ENCODE measurements at regions of chr9 and their contacts with region 1.

Region 1: DNA sequence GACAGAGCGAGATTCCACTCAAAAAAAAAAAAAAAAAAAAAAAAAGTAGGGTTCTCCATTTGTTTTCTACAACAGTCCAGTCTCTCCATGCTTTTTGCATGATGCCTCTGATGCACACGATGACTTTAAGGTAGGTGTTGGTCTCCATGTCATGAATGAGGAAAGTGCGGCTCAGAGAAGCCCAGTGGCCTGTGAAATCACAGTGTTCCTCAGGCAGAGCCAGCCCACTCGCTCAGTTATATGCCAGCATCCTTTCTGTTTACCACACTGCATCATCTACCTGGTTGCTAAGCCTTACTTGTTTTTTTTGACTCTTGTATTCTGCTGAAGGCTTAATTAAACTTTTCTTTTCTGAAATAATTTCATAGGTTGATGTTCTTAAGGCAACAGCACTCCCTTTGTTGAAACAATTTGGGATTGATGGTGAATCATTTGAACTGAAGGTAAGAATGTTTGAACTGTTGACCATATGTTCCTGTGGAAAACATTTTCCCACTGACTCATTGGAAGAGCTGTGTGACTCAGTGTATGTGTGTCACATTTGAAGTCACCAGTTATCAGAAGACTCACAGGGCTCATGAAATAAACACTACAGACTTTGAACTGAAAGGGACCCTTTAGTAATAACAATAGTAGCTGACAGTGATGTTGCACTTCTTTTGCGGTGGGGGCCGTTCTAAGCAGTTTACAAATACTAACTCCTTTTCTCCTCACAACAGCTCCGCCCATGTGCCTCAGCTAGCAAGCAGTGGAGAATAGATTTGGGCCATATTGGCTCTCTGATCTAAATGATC is 40.2 kb downstream of the RCL1 start:
- DNase-seq: peak; percentile 80
- H3K4me3 Mint-ChIP-seq: no peak overlapping the region
- H3K27ac Mint-ChIP-seq: peak overlapping the region; percentile 85
- H3K4me1 Mint-ChIP-seq: peaks cover 46% of the 10 kb centered on the region
- H3K27me3 Mint-ChIP-seq: no peaks in the 10 kb centered on the region

Region 2: DNA sequence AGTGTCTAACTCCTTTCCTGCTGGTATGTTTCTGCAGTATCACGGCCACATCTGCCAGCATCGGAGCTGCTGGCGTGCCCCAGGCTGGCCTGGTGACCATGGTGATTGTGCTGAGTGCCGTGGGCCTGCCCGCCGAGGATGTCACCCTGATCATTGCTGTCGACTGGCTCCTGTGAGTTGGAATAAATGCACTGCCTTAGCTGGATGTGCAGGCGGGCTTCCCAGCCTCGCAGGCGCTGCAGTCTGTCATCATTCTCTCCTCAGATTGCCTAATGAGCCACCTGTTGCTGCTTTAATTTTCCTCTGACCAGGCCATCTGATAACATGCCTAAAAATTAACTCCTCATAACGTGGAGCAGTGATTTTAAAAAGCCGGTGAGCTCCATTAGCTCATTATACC is 250.0 kb before region 1 on chr9:
- CTCF ChIA-PET with region 1: no interaction called
- intact Hi-C with region 1: no loop called
- DNase-seq: no peak
- H3K4me3 Mint-ChIP-seq: no peak overlapping the region
- H3K27ac Mint-ChIP-seq: no peak overlapping the region
- H3K4me1 Mint-ChIP-seq: no peaks in the 10 kb centered on the region
- H3K27me3 Mint-ChIP-seq: no peaks in the 10 kb centered on the region

Region 3: DNA sequence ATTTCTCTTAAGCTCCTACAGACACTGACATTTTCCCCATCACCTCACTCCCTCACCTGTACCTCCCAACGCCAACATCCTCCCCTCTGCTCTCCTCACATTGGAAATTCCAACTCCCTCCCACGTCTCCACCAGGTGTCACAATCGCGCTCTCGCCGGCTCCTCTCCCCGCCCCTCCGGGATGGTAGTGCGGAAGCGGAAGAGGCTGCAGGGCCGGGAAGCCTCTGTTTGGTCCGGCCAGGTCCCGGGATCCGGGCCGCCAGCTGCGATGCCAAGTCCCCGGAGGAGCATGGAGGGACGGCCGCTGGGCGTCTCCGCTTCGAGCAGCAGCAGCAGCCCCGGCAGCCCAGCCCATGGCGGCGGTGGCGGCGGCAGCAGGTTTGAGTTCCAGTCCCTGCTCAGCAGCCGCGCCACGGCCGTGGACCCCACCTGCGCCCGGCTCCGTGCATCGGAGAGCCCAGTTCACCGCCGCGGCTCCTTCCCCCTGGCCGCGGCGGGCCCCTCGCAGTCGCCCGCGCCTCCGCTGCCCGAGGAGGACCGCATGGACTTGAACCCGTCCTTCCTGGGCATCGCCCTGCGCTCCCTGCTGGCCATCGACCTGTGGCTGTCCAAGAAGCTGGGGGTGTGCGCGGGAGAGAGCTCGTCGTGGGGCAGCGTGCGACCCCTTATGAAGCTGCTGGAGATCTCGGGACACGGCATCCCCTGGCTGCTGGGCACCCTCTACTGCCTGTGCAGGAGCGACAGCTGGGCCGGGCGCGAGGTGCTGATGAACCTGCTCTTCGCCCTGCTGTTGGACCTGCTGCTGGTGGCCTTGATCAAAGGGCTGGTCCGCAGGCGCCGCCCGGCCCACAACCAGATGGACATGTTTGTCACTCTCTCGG is 170.6 kb before region 1 on chr9 and contains the start of gene PLPP6:
- CTCF ChIA-PET with region 1: no interaction called
- intact Hi-C with region 1: loop called (anchors 5 kb)
- DNase-seq: peak; percentile 91
- H3K4me3 Mint-ChIP-seq: peak within 1 kb of the TSS; percentile 87
- H3K27ac Mint-ChIP-seq: peak within 1 kb of the TSS; percentile 77
- H3K4me1 Mint-ChIP-seq: peaks cover 52% of the 10 kb centered on the region
- H3K27me3 Mint-ChIP-seq: no peaks in the 10 kb centered on the region
- total RNA-seq, gene PLPP6: 4.6 to 5.3 TPM

Region 4: GRCh38 chr9:4750023-4750673 is 82.8 kb before region 1 on chr9:
- CTCF ChIA-PET with region 1: no interaction called
- intact Hi-C with region 1: loop called (anchors 1 kb)
- DNase-seq: no peak
- H3K4me3 Mint-ChIP-seq: no peak overlapping the region
- H3K27ac Mint-ChIP-seq: no peak overlapping the region
- H3K4me1 Mint-ChIP-seq: peaks cover 34% of the 10 kb centered on the region
- H3K27me3 Mint-ChIP-seq: no peaks in the 10 kb centered on the region

Region 5: GRCh38 chr9:4814913-4815312 is 18.1 kb before region 1 on chr9:
- CTCF ChIA-PET with region 1: interaction called, 4 read pairs
- intact Hi-C with region 1: loop called (anchors 1 kb)
- DNase-seq: no peak
- H3K4me3 Mint-ChIP-seq: peak overlapping the region; percentile 9
- H3K27ac Mint-ChIP-seq: peak overlapping the region; percentile 87
- H3K4me1 Mint-ChIP-seq: peaks cover 60% of the 10 kb centered on the region
- H3K27me3 Mint-ChIP-seq: no peaks in the 10 kb centered on the region

Region 6: DNA sequence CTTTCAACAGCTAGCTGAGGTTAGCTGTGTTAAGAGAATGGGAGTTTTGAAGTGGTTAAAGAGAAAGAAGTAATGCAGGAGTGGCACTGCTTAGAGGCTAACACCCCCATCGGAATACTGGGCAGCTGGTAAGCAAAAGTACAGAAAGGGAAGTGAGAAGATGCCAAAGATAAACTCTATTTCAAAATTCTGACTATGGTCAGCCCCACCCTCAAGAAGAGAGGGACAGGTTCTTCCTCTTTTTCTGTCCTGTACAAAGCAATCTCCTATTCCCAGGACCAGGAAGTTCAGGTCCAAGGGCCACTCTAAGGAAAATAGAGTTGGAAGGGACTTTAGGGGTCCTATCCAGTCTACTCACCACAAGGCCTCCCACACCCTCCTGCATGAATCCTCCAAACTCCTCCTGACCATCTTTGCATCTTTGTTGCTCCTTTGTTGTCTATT is 106.2 kb after region 1 on chr9:
- CTCF ChIA-PET with region 1: no interaction called
- intact Hi-C with region 1: loop called (anchors 1 kb)
- DNase-seq: no peak
- H3K4me3 Mint-ChIP-seq: no peak overlapping the region
- H3K27ac Mint-ChIP-seq: peak overlapping the region; percentile 88
- H3K4me1 Mint-ChIP-seq: peaks cover 79% of the 10 kb centered on the region
- H3K27me3 Mint-ChIP-seq: no peaks in the 10 kb centered on the region

Region 7: GRCh38 chr9:4970970-4971641 is 138.1 kb after region 1 on chr9:
- CTCF ChIA-PET with region 1: no interaction called
- intact Hi-C with region 1: loop called (anchors 1 kb)
- DNase-seq: peak; percentile 91
- H3K4me3 Mint-ChIP-seq: no peak overlapping the region
- H3K27ac Mint-ChIP-seq: no peak overlapping the region
- H3K4me1 Mint-ChIP-seq: peaks cover 23% of the 10 kb centered on the region
- H3K27me3 Mint-ChIP-seq: no peaks in the 10 kb centered on the region

Region 8: DNA sequence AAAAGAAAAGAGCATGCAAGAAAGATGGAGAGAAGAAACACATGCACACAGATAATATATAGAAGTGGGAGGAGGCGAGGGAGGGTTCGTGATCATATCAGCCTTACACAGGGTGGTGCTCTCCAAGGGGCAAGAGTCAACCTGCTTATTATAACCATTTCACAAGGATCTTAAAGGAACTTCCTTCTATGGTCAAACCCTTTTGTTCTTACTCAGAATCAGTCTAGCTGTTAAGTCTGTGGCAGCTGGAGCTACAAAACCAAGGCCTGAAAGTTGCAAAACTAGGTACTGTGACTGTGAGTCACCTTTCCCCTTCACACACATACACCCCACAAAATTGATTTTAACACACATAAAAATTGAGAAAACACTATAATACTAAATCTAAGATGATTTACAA is 1018.5 kb after region 1 on chr9:
- CTCF ChIA-PET with region 1: no interaction called
- intact Hi-C with region 1: loop called (anchors 5 kb)
- DNase-seq: peak; percentile 73
- H3K4me3 Mint-ChIP-seq: no peak overlapping the region
- H3K27ac Mint-ChIP-seq: peak overlapping the region; percentile 26
- H3K4me1 Mint-ChIP-seq: peaks cover 41% of the 10 kb centered on the region
- H3K27me3 Mint-ChIP-seq: no peaks in the 10 kb centered on the region

Measured in activated naive CD4-positive, alpha-beta T cell treated with anti-CD3 and anti-CD28 coated beads for 36 hours (primary cell).